ENCODE measurements at regions of chr15 and their contacts with region 1.

Region 1: GRCh38 chr15:92714477-92715401 is 59.2 kb upstream of the FAM174B start:
- DNase-seq: peak; percentile 83 to 89 (median 87)
- H3K4me3 ChIP-seq: peak overlapping the region; percentile 54
- H3K27ac ChIP-seq: peak overlapping the region; percentile 86 to 93
- H3K4me1 ChIP-seq: no peaks in the 10 kb centered on the region
- H3K27me3 ChIP-seq: no peaks in the 10 kb centered on the region
- CTCF ChIP-seq: peak; percentile 84 to 93 (median 89)
- EP300 ChIP-seq: no peak
- POLR2A ChIP-seq: peak; percentile 80

Region 2: GRCh38 chr15:92097474-92098178 is 617.1 kb before region 1 on chr15:
- intact Hi-C with region 1: loop called in 2 of 4 experiments (anchors 5 kb)
- DNase-seq: peak in 1 of 5 donors; percentile 37
- H3K4me3 ChIP-seq: no peak overlapping the region
- H3K27ac ChIP-seq: no peak overlapping the region
- H3K4me1 ChIP-seq: peaks cover 3% of the 10 kb centered on the region
- H3K27me3 ChIP-seq: no peaks in the 10 kb centered on the region
- CTCF ChIP-seq: peak in 2 of 3 donors; percentile 46 to 47
- EP300 ChIP-seq: no peak
- POLR2A ChIP-seq: no peak

Region 3: DNA sequence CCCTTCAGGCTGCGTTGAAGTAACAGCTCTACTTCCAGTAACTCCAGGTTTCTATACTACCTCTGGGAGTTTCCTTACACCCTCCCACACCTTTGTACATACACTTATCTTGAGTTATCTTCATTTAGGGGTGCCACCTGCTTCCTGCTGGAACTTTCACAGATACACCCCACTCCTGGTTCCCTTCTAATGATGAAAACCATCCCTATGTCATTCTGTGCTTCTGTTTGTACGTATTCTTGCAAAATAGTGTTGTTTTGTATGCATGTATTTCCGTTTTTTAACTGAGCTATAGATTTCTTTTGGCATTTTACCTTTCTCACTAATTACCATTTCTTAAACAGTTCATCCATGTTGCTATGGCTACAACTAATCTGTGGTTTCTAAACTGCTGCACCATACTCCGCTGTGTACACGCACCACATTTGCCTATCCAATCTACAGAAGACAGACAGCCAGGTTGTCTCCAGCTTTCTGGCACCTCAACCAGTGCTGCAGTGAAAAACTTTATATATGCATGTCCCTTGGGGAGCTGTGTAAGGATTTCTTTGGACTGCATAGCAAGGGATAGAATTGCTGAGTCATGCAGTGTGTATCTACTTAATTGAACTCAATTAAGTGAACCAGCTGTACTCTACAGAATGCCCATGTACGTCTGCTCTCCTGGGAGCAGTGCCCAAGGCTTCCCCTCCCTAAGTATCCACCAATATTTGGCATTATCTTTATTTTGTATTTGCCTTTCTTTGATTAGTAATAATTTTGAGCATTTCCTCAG is 382.4 kb before region 1 on chr15:
- intact Hi-C with region 1: no loop called
- DNase-seq: no peak
- H3K4me3 ChIP-seq: no peak overlapping the region
- H3K27ac ChIP-seq: no peak overlapping the region
- H3K4me1 ChIP-seq: no peaks in the 10 kb centered on the region
- H3K27me3 ChIP-seq: no peaks in the 10 kb centered on the region
- CTCF ChIP-seq: no peak
- EP300 ChIP-seq: no peak
- POLR2A ChIP-seq: no peak

Region 4: GRCh38 chr15:92521624-92522008 is 193.1 kb before region 1 on chr15:
- intact Hi-C with region 1: loop called (anchors 5 to 10 kb)
- DNase-seq: peak; percentile 81 to 92 (median 83)
- H3K4me3 ChIP-seq: no peak overlapping the region
- H3K27ac ChIP-seq: no peak overlapping the region
- H3K4me1 ChIP-seq: no peaks in the 10 kb centered on the region
- H3K27me3 ChIP-seq: no peaks in the 10 kb centered on the region
- CTCF ChIP-seq: peak; percentile 49 to 96 (median 89)
- EP300 ChIP-seq: no peak
- POLR2A ChIP-seq: peak; percentile 8

Region 5: GRCh38 chr15:92553317-92553716 is 161.4 kb before region 1 on chr15:
- intact Hi-C with region 1: no loop called
- DNase-seq: no peak
- H3K4me3 ChIP-seq: no peak overlapping the region
- H3K27ac ChIP-seq: no peak overlapping the region
- H3K4me1 ChIP-seq: no peaks in the 10 kb centered on the region
- H3K27me3 ChIP-seq: no peaks in the 10 kb centered on the region
- CTCF ChIP-seq: no peak
- EP300 ChIP-seq: no peak
- POLR2A ChIP-seq: no peak

Region 6: GRCh38 chr15:92617549-92618520 is 96.9 kb before region 1 on chr15:
- intact Hi-C with region 1: loop called in 1 of 4 experiments (anchors 10 kb)
- DNase-seq: peak; percentile 84 to 93 (median 92)
- H3K4me3 ChIP-seq: peak overlapping the region; percentile 14
- H3K27ac ChIP-seq: peak overlapping the region; percentile 70 to 82
- H3K4me1 ChIP-seq: peaks cover 17% of the 10 kb centered on the region
- H3K27me3 ChIP-seq: no peaks in the 10 kb centered on the region
- CTCF ChIP-seq: no peak
- EP300 ChIP-seq: no peak
- POLR2A ChIP-seq: peak; percentile 14